ENCODE measurements at regions of chr17 and their contacts with region 1.

Region 1: DNA sequence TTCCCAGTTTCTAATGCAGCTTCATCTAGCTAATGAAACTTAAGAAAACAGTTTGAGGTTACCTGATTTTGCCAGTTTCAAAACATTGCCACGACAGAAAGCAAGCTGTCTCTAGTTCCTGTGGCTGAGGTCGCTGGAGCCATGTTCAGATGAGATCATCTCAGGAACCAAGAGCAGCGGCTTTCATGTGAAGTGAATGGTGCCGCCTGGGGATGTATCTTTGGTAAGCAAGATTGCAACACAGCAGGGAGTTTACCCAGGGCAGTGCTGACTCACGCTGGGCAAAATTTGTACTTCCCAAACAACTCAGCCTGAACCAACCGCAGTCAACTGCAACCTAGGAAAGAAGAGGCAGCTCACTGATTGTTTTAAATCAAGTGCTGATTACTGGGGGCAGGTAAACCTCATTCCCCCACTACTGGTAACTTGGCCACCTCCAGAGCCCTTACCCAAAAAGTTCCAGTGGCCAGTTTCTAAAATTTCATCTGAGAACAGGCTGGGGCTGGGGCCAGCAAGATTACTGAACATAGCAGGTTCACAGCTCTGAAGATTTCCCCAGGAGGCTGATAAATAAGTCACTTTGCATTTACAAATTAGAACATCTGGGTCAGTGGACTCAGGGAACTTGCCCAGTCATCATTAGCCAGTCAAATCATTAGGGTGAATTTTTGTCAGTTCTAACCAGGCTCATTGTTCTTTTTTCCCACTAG is at the start of gene RFFL:
- DNase-seq: peak; percentile 91
- H3K4me3 Mint-ChIP-seq: peak within 1 kb of the TSS; percentile 48
- H3K27ac Mint-ChIP-seq: peak within 1 kb of the TSS; percentile 94
- H3K4me1 Mint-ChIP-seq: peaks cover 60% of the 10 kb centered on the region
- H3K27me3 Mint-ChIP-seq: no peaks in the 10 kb centered on the region
- total RNA-seq, gene RFFL: 47.3 to 53.9 TPM

Region 2: DNA sequence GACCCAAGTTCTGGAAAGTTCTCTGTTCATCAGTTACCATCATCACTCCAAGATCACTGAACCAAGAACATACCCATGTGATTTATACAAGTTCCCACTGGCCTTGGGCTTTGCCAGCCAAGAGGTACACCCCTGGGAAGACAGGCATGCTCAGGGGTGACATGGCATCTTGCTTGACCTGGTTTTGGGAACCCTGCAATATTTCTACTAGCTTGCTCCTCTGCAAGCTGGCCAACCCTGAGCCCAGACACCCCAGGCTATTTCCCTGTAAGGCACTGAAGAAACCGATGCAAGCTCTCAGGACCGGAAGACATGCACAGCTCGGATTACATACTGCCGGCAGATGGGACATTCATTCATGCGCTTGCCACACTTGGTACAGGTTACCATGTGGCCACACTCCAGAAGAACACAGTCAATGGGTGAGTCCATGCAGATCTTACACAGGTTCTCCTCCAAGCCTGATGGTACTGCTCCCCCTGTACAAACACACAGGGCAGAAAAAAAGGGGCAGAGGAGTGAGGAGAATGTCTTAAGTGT is 51.9 kb before region 1 on chr17:
- CTCF ChIA-PET with region 1: interaction called, 10 read pairs
- POLR2A ChIA-PET with region 1: interaction called, 3 read pairs
- DNase-seq: no peak
- H3K4me3 Mint-ChIP-seq: no peak overlapping the region
- H3K27ac Mint-ChIP-seq: no peak overlapping the region
- H3K4me1 Mint-ChIP-seq: no peaks in the 10 kb centered on the region
- H3K27me3 Mint-ChIP-seq: no peaks in the 10 kb centered on the region

Region 3: DNA sequence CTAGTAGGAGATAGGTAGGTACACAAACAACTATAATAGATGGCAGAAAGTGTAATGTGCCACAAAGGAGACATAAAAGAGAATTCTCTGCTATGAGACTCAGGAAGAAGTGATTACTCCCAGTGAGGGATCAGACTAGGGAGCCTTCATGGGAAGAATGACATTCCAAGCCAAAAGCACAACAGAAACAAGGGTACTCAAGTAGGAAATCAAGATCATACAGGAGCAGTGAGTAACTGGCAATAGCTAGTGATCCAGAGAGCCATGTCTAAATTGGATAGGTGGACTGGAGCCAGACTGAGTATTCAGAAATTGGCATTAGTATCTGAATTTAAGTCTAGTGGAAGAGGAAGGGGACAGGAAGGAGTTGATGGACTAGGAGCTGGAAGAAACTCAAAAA is 10.9 kb before region 1 on chr17:
- CTCF ChIA-PET with region 1: interaction called, 24 read pairs
- POLR2A ChIA-PET with region 1: interaction called, 126 read pairs
- DNase-seq: no peak
- H3K4me3 Mint-ChIP-seq: no peak overlapping the region
- H3K27ac Mint-ChIP-seq: peak overlapping the region; percentile 88
- H3K4me1 Mint-ChIP-seq: peaks cover 60% of the 10 kb centered on the region
- H3K27me3 Mint-ChIP-seq: no peaks in the 10 kb centered on the region

Region 4: GRCh38 chr17:35082073-35082657 is 18.5 kb after region 1 on chr17:
- CTCF ChIA-PET with region 1: interaction called, 37 read pairs
- POLR2A ChIA-PET with region 1: interaction called, 164 read pairs
- DNase-seq: no peak
- H3K4me3 Mint-ChIP-seq: peak overlapping the region; percentile 34
- H3K27ac Mint-ChIP-seq: peak overlapping the region; percentile 87
- H3K4me1 Mint-ChIP-seq: peaks cover 85% of the 10 kb centered on the region
- H3K27me3 Mint-ChIP-seq: no peaks in the 10 kb centered on the region